ENCODE measurements at regions of chr2 and their contacts with region 1.

Region 1: DNA sequence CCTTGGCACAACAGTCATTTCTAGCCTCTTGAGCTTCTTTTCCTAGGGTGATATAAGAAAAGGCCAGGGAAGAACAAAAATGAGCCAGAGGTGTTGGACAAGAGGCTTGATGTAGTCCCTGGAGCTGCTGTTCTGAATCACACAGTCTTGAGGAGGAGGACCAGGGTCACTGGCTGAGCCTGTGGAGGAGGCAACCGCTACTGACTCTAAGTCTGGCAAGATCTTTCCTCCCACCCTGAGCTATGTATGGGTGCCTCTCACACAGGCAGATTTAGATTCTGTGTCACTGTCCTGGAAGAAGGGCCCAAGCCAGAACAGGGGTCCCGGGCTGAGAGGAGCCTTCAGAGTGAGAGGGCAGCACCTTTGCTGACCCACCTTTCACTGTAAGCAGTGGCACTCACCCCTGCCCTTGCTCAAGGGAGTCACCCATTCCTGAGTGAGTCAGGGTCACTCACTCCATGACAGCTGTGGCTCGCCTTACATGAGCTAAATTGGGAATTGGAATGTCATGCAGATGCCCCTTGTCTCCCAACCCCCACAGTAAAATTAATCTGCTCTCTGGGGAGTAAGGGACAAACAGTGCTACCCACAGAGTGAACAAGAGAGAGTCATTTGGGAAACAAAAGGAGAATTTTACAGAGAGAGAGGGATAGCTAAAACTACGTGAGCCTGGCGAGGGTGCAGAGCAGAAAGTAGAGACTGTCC is at the start of gene TRIM54:
- DNase-seq: no peak
- H3K4me3 Mint-ChIP-seq: no peak within 1 kb of the TSS
- H3K27ac Mint-ChIP-seq: no peak within 1 kb of the TSS
- H3K4me1 Mint-ChIP-seq: peaks cover 4% of the 10 kb centered on the region
- H3K27me3 Mint-ChIP-seq: peaks cover 26% of the 10 kb centered on the region
- total RNA-seq, gene TRIM54: 0.33 and 0.47 TPM in 2 replicates

Region 2: DNA sequence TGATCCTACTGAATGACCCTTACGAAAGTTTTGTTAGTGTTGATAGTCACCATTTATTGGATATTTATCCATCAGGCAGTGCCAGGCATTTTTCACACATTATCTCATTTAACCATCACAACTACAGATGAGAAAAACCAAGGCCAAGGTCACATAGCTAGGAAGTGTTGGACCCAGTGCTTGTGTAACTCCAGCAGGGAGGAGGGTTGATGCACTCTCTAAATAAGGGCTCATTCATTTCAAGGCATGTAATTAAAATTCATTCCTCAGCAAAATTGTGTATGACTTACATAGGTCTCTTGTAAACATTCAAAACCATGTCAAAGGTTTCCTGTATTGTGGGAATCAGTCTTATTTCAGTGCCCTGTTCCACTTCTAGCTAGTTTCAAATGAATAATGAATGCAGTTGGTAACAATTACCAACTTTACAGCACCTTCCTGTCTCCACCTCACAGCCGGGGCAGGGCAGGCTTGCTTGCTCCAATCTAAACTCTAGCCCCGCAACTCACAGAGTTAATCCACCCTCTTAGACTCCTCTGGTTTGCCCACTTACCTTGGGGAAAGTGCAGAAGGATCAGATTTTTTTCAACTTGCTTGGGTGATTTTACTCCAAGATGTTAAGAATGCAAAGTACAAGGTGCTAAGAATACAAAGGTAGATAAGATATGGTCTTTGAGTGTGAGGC is 317.4 kb before region 1 on chr2:
- intact Hi-C with region 1: loop called (anchors 5 kb)
- DNase-seq: no peak
- H3K4me3 Mint-ChIP-seq: no peak overlapping the region
- H3K27ac Mint-ChIP-seq: no peak overlapping the region
- H3K4me1 Mint-ChIP-seq: peaks cover 7% of the 10 kb centered on the region
- H3K27me3 Mint-ChIP-seq: peaks cover 30% of the 10 kb centered on the region

Region 3: DNA sequence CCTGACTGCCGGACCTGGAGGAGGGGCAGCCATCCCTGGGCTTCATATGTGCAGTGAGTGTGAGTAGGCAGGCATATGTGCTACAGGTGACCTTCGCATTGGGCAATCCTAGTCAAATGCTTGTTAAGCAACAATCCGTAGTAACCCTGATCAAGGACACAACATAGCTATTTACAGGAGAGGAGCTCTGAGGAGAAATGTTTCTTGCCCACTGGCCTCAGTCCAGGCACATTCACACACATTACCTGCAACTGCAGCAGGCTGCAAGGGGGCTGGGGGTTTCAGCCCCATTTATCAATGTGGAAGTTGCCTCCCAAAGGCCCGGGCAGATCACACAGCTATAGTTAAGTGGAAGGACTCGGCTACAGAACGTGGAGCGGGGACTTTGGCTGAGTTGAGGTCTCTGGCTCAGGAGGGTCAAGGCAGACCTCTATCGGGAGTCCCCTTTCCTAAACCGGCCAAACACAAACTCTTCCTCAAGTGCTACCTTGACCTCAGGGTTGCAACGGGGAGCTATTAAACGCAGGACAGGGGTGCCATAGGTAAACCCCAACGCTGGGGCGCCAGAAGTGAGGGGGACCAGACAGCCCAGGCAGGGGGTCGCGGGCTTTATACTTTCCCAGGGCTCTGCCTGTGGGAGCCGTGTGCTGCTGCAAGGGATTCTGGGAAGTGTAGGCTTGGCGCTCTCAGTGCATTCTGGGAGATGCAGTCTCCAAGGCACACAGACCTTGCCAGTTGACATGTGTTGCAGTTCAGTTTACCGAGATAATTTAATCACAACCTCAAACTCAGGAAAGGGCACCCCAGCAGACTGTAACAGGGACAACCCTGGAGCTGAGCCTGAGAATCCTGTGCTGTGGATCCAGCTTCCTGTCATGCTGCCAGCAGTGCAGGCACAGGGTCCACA is 186.0 kb before region 1 on chr2:
- intact Hi-C with region 1: loop called (anchors 1 kb)
- DNase-seq: peak; percentile 85
- H3K4me3 Mint-ChIP-seq: peak overlapping the region; percentile 71
- H3K27ac Mint-ChIP-seq: peak overlapping the region; percentile 48
- H3K4me1 Mint-ChIP-seq: peaks cover 15% of the 10 kb centered on the region
- H3K27me3 Mint-ChIP-seq: no peaks in the 10 kb centered on the region

Region 4: GRCh38 chr2:27249891-27250651 is 31.9 kb before region 1 on chr2:
- intact Hi-C with region 1: loop called (anchors 1 kb)
- DNase-seq: peak; percentile 89
- H3K4me3 Mint-ChIP-seq: no peak overlapping the region
- H3K27ac Mint-ChIP-seq: no peak overlapping the region
- H3K4me1 Mint-ChIP-seq: no peaks in the 10 kb centered on the region
- H3K27me3 Mint-ChIP-seq: peaks cover 11% of the 10 kb centered on the region

Region 5: GRCh38 chr2:27264753-27265535 is 17.1 kb before region 1 on chr2:
- intact Hi-C with region 1: loop called (anchors 2 kb)
- DNase-seq: peak; percentile 83
- H3K4me3 Mint-ChIP-seq: peak overlapping the region; percentile 74
- H3K27ac Mint-ChIP-seq: no peak overlapping the region
- H3K4me1 Mint-ChIP-seq: peaks cover 25% of the 10 kb centered on the region
- H3K27me3 Mint-ChIP-seq: peaks cover 44% of the 10 kb centered on the region

Measured in activated CD4-positive, alpha-beta T cell treated with anti-CD3 and anti-CD28 coated beads, Interleukin-2, amount 10 ng/mL, durations not matched to agents 24 days and 14 days (primary cell).